GM13976 (cell line): ENCODE measurements at regions of chr16 and their contacts with region 1.

Region 1: DNA sequence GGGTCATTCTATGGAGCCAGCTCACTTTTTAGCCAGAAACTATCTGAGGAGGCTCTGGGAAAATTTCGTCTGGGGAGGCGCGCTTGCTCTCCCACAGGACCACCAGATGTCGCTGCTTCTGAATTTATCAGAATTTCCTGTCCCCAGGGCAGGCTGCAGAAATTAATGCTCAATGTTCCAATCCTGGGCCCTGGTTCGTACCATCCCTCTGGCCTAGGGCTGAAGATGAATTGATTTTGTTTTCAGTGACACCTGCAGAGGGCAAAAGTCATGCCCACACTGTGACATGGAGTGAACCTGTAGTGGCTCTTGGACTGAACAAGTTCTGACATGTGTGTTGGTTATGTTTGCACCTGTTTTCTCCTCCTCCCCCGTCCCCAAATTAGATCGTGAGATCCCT is 482.6 kb downstream of the NPIPA7 start:
- DNase-seq: peak; percentile 73
- CTCF ChIP-seq: peak; percentile 68

Region 2: GRCh38 chr16:17194190-17194780 is 332.7 kb after region 1 on chr16:
- in situ Hi-C with region 1: loop called (anchors 25 kb)
- DNase-seq: peak; percentile 66
- CTCF ChIP-seq: peak; percentile 47

Region 3: DNA sequence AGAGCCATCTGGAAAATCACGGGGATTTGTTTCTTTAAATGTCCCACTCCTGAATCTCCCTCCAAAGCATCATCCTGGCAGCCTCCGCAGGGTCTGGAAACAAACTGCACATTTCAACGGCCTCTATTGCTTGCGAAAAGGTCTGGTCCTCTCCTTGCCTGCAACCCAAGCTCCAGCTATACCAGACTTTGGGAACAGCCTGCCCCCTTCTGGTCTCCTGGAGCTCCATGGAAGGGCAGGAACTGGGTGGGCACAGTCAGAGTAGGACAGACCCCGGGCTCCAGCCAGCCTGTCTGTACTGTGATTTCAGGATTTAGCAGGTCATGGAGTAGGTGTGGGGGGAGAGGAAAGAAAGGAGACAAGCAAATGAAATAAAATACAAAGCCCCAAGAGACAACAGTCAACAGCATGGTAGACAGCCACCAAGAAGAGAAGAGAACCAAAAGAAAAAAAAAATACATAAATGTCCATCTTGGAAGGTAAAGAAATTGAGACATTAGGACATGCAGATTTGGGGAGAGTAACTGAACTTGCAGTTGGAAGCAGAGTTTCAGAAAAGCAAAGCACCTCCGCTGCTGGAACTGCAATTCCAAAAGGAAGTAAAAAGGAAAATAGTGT is 606.5 kb after region 1 on chr16:
- in situ Hi-C with region 1: loop called (anchors 25 kb)
- DNase-seq: no peak
- CTCF ChIP-seq: peak; percentile 84

Region 4: DNA sequence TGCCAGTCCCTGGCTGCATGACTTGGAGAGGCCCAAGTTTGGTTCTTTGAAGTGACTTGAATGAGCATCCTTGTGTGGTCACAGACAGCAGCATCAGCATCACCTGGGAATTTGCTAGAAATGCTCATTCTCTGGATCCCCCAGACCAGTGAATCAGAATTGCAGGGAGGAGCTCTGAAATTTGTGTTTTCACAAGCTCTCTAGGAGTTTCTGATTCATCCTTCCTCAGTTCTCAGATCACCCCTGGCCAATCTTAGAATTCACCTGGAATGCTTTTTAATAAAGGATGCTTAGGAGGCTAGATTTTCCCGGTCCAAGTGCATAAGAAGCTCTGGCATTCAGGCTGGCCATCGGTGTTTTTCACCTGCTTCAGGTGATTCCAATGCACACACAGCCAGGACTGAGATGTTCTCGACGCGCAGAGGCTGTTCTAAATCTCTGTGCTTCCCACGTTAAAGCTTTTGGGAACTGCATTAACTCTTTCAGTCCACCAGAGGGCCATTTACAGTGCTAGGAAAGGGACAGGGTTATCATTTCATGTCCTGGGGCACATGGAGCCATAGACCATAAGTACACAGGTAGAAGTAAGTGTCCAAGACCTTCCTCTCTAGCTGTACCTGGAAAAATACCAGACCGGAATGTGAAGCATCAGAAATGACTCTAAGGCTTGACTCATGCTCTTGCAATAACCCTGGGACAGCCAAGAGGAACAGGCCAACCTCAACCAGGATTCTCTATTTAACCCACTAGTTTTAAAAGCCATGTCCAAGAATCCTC is 694.9 kb after region 1 on chr16:
- in situ Hi-C with region 1: loop called (anchors 25 kb)
- DNase-seq: peak; percentile 51
- CTCF ChIP-seq: peak; percentile 61